ENCODE measurements at regions of chr5 and their contacts with region 1.

Region 1: DNA sequence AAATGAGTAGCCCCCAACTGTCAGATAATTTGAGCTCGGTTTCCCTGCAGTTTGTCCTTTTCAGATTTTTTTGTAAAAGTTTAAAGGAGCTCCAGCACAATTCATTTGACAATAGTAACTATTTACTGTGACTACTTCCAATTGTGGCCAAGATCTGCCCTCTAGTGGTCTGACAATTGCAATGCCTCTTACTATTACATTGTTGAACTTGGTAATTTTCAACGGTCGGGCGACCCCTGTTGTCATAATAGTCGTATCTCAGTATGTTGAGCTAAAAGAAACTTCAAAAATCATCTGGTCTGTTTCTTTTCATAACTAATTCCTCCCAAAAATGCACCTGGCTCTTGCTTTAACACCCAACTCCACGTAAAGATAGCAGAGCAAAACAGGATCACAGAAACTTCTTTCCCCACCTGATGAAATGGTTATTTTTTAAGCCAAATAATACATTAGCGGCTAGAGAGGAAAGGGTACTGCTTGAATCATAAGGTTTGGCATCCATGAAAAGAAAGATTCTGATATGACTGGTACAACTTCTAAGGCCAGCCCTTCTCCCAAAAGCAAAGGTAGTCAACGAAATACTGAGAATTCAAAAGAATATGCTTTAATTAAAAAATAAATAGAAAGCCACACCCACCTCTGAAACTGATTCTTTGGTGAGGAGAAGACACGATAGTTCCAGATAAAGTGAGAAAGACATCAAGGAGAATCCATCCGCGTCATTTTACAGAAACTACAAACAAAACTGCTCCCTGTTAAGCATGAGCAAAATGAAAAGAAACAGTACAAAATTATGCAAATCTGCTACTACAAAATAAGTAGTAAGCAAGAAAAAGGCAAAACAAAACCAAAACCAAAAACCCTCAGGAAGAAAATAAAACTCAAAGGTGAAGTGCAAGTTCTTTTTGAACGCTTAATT is 76.9 kb upstream of the HTR4 start:
- DNase-seq: no peak
- H3K4me3 ChIP-seq: no peak overlapping the region
- H3K27ac ChIP-seq: no peak overlapping the region
- H3K4me1 ChIP-seq: no peaks in the 10 kb centered on the region
- H3K27me3 ChIP-seq: no peaks in the 10 kb centered on the region
- CTCF ChIP-seq: peak; percentile 74 to 90 (median 78)
- POLR2A ChIP-seq: no peak

Region 2: DNA sequence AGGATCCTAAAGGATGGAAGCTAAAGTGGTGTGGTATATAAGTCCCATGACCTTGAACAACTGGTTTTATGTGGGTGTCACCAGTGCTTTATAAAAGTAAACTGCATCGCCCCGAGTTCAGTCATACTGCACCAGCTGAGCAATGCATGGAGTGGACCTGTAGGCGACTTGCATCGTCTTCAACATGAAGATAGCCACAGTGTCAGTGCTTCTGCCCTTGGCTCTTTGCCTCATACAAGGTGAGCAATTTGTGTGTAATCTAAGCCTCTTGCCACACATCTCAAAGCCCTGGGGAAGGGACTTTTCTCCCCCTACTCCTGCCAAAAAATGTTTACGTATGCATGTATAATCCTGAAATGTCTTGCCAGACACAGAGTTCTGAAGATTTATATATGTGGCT is 667.3 kb before region 1 on chr5 and contains the start of gene SPINK5:
- intact Hi-C with region 1: no loop called
- DNase-seq: no peak
- H3K4me3 ChIP-seq: peak within 1 kb of the TSS in 1 of 2 donors; percentile 5
- H3K27ac ChIP-seq: no peak within 1 kb of the TSS
- H3K4me1 ChIP-seq: no peaks in the 10 kb centered on the region
- H3K27me3 ChIP-seq: no peaks in the 10 kb centered on the region
- CTCF ChIP-seq: no peak
- POLR2A ChIP-seq: no peak
- total RNA-seq, gene SPINK5: 235 TPM

Region 3: DNA sequence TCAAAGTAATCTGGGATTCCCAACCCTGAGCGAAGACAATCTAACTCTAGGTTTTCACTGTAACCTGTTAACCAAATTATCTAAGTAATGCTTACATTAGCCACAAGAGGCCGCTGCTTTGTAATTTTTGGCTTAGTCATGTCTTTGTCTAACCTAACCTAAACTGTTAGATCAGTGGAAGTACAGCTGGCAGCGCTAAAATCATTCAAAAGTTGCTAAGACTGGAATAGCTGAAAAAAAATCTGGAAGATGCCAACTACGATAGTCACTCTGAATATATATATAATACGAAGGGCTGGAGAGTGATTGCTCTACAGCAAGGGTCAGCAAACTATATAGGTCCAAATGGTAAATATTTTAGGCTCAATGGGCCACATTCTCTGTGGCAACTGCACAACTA is 287.2 kb before region 1 on chr5:
- intact Hi-C with region 1: loop called (anchors 10 kb)
- DNase-seq: no peak
- H3K4me3 ChIP-seq: no peak overlapping the region
- H3K27ac ChIP-seq: no peak overlapping the region
- H3K4me1 ChIP-seq: no peaks in the 10 kb centered on the region
- H3K27me3 ChIP-seq: no peaks in the 10 kb centered on the region
- CTCF ChIP-seq: peak; percentile 42 to 70 (median 66)
- POLR2A ChIP-seq: no peak

Region 4: DNA sequence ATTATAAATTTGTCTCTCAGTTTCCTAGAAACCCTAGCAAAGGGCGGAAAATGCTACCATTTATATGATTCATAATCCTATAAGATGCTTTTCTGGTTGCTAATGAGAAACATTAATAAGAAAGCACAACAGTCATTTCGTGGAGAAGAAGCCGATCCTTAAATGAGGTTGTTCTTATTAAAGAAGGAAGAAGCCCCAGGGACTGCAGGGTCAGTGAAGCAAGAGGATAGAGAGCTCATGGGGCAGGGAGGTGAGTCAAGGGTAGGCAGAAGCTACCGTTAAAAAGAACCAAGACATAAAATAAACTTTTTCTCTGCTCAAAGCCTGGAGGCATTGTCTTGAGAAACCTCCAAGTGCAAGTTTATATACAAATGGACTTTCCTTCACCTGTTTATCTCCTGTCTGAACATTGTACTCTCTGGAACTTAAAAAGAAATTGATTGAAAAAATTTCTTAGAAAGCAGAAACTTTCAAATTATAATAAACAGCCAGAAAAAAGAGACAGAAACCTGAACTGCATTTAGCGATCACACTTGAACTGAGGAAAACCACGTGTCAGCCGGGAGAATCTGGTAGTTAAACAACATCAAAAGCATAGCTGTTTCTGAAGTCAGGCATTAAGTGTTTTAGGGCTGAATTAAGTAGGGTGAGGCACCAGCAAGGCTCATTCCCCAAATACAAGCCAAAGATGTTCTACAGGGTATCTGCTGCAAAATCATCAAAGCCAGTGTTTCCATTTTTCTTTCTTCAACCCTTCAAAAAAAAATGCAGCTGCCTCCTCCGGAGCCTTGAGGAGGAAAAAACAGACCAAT is 98.7 kb before region 1 on chr5:
- intact Hi-C with region 1: no loop called
- DNase-seq: no peak
- H3K4me3 ChIP-seq: no peak overlapping the region
- H3K27ac ChIP-seq: no peak overlapping the region
- H3K4me1 ChIP-seq: no peaks in the 10 kb centered on the region
- H3K27me3 ChIP-seq: no peaks in the 10 kb centered on the region
- CTCF ChIP-seq: no peak
- POLR2A ChIP-seq: no peak

Region 5: DNA sequence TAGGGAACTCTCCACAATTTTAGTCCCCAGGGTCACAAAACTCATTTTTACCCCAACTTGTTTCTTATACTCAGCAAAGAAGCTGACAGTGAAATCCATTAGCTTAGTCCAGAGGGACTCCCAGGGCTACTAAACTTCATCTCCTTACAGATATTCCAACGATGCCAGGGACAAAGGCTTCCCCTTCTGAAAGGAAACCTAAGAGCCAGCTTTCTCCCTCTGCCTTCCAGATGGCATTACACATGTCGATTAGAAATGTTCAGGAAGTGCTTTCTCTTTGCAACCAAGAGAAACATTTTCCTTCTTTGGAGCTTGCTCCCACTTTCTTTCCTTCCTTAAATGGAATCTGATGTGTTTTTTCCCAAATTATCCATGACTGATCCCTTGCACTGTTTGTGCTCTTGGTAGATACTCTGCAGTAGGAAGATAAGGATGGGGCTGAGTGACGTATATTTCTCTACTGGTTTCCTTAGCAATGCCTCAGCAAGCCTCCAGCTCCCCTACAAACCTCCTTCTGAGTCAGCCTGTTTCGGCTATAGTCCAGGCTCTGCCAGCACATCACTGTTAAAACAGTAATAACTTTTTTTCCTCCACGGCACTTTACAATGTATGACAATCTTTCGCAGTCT is 33.9 kb before region 1 on chr5:
- intact Hi-C with region 1: no loop called
- DNase-seq: no peak
- H3K4me3 ChIP-seq: no peak overlapping the region
- H3K27ac ChIP-seq: no peak overlapping the region
- H3K4me1 ChIP-seq: no peaks in the 10 kb centered on the region
- H3K27me3 ChIP-seq: no peaks in the 10 kb centered on the region
- CTCF ChIP-seq: no peak
- POLR2A ChIP-seq: no peak

Region 6: DNA sequence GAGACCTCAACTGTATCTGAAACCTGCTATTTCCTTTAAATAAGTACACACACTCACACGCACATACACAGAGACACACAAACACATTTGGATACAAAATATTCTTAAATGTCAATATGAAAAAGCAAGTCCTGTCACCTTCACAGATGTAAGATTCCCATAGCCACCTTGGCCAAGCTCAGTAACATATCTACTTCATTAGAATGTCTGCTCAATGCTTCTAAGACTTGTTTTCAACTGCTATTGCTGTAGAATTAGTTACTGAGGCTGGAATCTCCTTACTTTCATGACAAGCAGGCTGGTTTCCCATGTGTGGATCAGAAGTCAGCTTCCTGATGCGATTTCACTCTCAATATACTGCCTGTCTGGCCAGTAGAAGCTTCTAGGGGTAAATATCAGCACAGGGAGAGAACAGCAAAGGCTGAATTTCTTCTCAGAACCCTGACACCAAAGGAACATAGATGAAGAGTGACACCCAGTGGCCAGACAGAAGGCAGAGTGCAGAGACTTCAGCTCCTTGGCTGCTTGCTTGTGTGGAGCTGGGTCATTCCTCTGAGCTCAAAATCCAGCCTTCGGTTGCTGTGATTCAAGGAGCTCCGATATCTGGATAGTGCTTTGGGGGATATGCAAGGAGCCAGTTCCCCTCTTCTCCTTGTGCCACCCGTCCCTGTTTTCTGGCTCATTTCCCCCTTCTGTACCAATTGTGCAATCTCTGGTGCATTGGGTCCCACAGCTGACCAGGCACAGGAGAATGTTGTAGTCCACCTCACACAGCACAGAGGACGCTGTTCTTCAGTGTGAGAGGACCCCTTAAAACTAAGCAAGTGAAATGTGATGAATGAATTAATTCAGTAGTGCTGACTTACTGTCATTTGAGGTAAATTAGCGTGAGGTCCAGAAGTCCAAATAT is 383.5 kb after region 1 on chr5:
- intact Hi-C with region 1: loop called (anchors 10 kb)
- DNase-seq: no peak
- H3K4me3 ChIP-seq: no peak overlapping the region
- H3K27ac ChIP-seq: no peak overlapping the region
- H3K4me1 ChIP-seq: no peaks in the 10 kb centered on the region
- H3K27me3 ChIP-seq: no peaks in the 10 kb centered on the region
- CTCF ChIP-seq: peak; percentile 33 to 52 (median 51)
- POLR2A ChIP-seq: no peak